CD8-positive, alpha-beta T cell (primary cell): ENCODE measurements at regions of chrX and their contacts with region 1.

Region 1: GRCh38 chrX:21735038-21735767 is 22.7 kb downstream of the SMPX start:
- DNase-seq: no peak
- ATAC-seq: no peak
- H3K4me3 ChIP-seq: no peak overlapping the region
- H3K4me3 Mint-ChIP-seq: no peak overlapping the region
- H3K27ac ChIP-seq: no peak overlapping the region
- H3K27ac Mint-ChIP-seq: no peak overlapping the region
- H3K4me1 ChIP-seq: no peaks in the 10 kb centered on the region
- H3K4me1 Mint-ChIP-seq: no peaks in the 10 kb centered on the region
- H3K27me3 ChIP-seq: no peaks in the 10 kb centered on the region
- H3K27me3 Mint-ChIP-seq: peaks cover 11% of the 10 kb centered on the region
- CTCF ChIP-seq: no peak

Region 2: DNA sequence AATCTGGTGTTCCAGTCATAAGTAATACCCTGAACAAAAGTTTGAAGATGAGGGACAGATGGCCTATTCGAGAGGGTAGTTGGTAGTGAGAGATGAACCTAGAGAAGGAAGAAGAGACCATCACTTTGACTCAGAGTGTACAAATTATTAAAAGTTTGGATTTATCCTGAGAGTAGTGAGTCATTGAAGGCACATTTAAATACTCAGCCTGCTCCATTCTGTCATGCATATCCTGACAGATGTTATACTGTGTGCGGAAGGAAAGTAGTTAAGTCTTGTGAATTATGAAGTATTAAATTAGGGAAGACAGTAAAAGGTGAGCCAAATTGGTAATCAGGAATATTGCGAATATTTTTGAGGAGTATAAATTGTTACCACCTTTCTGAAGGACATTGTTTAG is 170.2 kb before region 1 on chrX:
- CTCF ChIA-PET with region 1: no interaction called
- POLR2A ChIA-PET with region 1: no interaction called
- intact Hi-C with region 1: no loop called
- DNase-seq: no peak
- ATAC-seq: no peak
- H3K4me3 ChIP-seq: no peak overlapping the region
- H3K4me3 Mint-ChIP-seq: no peak overlapping the region
- H3K27ac ChIP-seq: no peak overlapping the region
- H3K27ac Mint-ChIP-seq: no peak overlapping the region
- H3K4me1 ChIP-seq: no peaks in the 10 kb centered on the region
- H3K4me1 Mint-ChIP-seq: no peaks in the 10 kb centered on the region
- H3K27me3 ChIP-seq: no peaks in the 10 kb centered on the region
- H3K27me3 Mint-ChIP-seq: no peaks in the 10 kb centered on the region
- CTCF ChIP-seq: no peak

Region 3: DNA sequence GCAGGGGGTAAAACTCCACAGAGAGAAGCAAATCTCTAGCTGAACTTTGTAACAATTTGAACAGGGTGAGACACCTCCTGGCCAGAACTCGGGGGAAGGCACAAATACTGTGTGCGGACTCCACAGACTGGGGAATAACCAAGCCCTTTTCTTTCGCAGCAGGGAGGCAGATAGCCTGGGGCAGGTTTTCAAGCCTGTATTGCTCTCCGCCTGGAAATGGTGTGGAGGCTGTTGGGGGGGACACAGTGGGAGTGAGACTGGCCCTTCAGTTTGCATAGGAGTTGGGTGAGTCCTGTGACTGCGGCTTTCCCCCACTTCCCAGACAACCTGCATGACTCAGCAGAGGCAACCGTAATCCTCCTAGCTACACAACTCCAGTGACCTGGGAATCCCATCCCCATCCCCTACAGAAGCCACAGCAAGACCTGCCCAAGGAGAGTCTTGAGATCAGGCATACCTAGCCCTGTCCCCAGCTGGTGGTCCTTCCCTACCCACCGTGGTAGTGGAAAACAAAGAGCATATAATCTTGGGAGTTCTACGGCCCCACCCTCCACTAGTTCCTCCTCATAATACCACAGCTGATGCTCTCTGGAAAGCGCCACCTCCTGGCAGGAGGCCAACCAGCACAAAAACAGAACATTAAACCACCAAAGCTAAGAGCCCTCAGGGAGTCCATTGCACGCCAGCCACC is 35.6 kb after region 1 on chrX:
- CTCF ChIA-PET with region 1: no interaction called
- POLR2A ChIA-PET with region 1: no interaction called
- intact Hi-C with region 1: loop called in 1 of 2 experiments (anchors 1 kb)
- DNase-seq: no peak
- ATAC-seq: no peak
- H3K4me3 ChIP-seq: no peak overlapping the region
- H3K4me3 Mint-ChIP-seq: no peak overlapping the region
- H3K27ac ChIP-seq: no peak overlapping the region
- H3K27ac Mint-ChIP-seq: no peak overlapping the region
- H3K4me1 ChIP-seq: peaks cover 7% of the 10 kb centered on the region
- H3K4me1 Mint-ChIP-seq: peaks cover 24% of the 10 kb centered on the region
- H3K27me3 ChIP-seq: no peaks in the 10 kb centered on the region
- H3K27me3 Mint-ChIP-seq: no peaks in the 10 kb centered on the region
- CTCF ChIP-seq: no peak